ENCODE measurements at regions of chr9 and their contacts with region 1.

Region 1: DNA sequence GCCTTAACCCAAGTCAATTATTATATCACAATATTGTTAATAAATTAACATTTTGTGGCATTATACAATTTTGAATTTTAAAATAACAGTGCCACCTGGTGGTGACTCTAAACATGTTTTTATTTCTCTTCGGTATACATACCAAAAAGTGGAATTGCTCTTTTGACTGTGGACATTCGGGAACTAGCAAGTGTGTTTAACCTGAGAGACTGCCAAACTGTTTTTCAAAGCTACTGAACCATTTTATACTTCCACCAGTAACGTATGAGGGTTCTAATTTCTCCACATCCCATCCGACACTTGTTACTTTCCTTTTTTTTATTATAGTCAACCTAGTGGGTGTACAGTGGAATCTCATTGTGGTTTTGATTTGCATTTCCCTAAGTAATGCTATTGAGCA is 18.3 kb upstream of the HSDL2 start:
- DNase-seq: no peak

Region 2: DNA sequence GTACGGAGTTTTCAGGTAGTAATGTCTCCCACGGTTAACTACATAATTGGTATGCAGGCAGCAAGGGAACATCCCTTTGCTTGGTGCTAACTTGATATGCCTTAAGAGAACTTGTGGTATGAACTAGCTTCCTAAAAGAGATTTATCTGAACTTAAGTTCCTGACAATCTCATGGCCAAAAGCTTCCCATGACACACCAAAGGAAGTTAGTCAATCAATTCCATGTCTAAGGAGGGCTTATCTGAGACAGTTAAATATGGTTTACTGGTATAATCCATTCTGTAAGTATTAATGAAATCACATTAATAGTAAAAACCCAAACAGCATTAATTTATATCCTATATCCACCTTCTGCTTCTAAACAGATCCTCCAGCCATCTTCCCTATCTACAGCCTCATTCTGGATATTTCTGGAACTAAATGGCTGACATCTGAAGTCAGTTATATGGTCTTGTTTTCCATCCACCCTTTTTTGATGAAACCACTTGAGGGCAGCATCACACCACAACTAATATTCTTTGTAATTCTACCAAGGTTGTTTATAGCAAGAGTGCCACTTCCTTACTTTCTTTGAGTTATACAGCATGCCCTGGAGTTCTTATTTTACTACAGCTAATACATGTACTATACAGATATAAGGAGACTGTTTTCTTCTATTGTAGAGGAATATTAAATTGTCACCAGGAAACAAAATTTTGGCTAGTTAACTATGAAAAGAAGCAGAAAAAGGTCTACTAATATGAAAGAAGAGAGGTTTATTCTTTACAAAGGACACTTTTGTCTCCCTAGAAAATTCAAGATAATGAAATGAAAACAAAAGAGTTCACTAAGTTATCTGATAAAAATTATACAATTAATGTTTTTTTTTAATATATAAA is 601.6 kb before region 1 on chr9:
- intact Hi-C with region 1: loop called (anchors 10 kb)
- DNase-seq: peak in 2 of 10 donors; percentile 20 to 32

Region 3: DNA sequence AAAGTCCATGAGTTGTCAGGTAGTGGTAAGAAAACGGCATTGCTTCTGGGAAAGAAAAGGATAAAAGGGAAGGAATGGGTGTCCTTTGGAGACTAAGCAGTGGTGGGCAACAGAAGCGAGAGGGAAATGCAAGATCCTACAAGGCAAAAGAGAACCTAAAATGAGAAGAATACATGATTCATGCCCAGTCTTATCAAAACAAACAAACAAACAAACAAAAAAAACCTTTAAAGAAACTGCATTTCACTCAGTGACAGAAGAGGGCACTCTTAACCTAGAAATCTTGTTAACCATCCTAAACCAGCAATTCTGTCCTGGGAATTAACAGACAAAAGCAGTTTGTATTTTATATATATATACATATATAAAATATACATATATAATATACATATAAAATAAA is 275.0 kb before region 1 on chr9:
- intact Hi-C with region 1: loop called (anchors 2 kb)
- DNase-seq: no peak